Posterior vena cava (tissue), 2 donors: ENCODE measurements at regions of chr1 and their contacts with region 1.

Region 1: GRCh38 chr1:33257772-33258712 is 1.8 kb downstream of the ZNF362 start:
- DNase-seq: peak; percentile 78

Region 2: DNA sequence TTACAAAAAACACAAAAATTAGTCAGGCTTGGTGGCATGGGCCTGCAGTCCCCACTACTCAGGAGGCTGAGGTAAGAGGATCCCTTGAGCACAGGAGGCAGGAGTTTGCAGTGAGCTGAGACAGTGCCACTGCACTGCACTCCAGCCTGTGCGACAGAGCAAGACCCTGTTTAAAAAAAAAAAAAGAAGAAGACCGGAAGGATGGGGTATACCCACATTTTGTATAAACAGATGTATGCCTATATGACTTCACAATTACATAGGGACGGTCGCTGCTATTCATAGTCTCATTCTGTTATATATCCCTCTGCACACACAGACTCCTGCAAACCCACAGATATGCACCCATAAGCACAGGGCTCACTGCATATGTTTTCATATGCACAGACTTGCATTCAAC is 994.3 kb before region 1 on chr1:
- intact Hi-C with region 1: no loop called
- DNase-seq: no peak

Region 3: DNA sequence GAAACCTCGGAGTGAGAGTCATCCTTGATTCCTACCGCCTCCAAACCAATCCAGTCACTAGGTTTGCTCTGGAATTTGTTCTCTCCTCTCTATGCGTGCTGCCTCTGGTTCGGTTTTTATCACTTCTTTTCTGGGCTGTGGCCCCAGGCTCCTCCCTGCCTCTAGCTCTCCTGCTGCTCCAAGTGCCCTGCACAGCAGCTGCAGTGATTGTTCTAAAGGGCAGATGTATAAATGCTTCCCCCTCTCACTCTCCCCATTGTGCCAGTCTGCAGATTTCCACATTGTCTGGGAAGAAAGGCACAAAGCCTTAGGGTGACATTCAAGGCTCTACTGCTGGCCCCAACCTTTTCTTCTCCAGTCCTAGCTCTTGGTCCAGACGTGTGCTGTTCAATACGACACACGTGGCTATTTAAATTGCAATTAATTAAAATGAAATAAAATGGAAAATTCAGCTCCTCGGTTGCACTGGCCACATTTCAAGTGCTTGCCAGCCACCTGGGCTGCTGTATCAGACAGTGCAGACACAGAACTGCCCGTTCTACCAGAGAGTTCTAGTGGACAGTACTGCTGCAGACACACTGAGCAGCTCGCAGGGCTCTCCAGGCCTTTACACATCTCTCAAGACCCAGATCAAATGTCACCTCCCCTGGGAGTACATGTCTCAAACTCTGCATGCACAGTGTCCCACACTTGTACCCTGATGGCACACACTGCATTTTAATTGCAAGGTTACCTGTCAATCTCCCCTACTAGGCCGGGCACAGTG is 88.6 kb before region 1 on chr1:
- intact Hi-C with region 1: no loop called
- DNase-seq: peak; percentile 26

Region 4: GRCh38 chr1:33247545-33247944 is 10.5 kb before region 1 on chr1:
- intact Hi-C with region 1: loop called in 1 of 2 experiments (anchors 1 kb)
- DNase-seq: peak; percentile 2

Region 5: DNA sequence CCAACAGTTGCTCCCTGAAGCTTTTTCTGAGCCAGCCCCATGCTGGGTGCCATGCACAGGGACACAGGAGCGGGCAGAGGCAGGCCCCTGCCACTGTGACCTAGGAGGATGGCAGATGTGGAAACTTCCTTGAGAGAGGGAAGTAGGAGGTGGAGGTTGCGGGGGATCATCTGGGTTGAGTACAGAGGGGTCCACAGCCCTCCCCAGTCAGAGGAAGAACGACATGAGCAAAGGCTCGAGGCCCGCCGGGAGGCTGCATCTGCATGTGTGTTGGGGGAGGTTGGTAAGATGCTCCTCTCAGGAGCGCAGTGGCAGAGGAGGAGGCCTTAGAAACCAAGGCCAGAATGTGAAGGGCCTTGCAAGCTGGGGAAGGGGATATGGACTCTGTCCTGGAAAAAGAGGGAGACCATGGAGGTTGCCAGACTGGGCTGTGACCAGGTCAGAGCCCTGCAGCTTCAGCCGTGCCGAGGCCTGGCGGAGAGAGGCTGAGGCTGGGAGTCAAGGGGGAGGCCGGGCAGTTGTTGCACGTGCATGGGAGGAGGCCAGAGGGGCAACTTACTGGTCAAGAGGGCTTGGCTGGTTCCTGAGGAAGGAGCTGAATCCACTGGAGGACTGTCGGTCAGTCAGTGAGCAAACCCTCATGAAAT is 31.0 kb after region 1 on chr1:
- intact Hi-C with region 1: loop called in 1 of 2 experiments (anchors 1 kb)
- DNase-seq: no peak

Region 6: GRCh38 chr1:33306648-33307493 is 48.8 kb after region 1 on chr1:
- intact Hi-C with region 1: no loop called
- DNase-seq: peak; percentile 79